ENCODE measurements at regions of chr16 and their contacts with region 1.

Region 1: DNA sequence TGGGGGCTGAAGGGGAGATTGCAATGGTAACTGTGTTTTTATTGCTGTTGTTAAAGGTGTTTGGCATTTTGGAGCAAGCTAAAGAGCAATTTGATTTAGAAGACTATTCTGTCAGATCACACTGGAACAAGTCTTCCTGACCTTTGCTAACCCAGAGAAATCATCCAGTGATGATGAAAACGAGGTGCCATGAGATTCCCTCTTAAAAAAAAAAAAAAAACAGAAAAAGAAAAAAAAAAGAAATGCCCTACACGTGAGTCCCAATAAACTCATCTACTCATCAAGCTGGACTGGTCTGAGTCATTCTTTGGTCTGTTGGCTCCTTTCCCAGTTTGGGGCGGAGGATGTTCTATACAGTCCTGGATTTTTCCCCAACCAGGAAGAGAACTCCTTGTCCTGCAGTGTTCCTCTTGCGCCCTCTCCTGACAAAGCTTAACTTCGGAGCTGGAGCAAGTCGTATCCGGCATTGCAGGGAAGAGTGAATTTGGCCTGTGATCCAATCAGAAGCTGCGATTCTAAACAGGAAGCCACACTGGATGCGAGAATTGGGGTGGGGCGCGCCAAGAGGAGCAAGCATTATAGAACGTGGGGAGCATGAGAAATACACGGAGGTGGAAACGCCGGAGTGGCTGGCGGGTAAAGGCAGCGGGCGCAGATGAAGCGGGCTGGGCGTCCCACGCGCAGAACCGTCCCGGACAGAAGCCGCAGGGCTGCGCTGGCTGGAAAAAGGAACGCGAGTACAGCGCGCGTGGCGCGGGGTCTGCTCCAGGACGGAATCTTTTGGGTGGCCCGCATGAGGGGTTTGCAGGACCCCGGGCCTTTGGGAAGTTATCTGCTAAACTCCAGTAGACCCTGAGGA is 22.4 kb upstream of the CRYM start:
- H3K4me3 ChIP-seq: peak overlapping the region; percentile 76
- H3K27ac ChIP-seq: peak overlapping the region; percentile 37; the same call in 1 of the 2 replicates
- H3K4me1 ChIP-seq: no peaks in the 10 kb centered on the region
- CTCF ChIP-seq: peak; percentile 93

Region 2: DNA sequence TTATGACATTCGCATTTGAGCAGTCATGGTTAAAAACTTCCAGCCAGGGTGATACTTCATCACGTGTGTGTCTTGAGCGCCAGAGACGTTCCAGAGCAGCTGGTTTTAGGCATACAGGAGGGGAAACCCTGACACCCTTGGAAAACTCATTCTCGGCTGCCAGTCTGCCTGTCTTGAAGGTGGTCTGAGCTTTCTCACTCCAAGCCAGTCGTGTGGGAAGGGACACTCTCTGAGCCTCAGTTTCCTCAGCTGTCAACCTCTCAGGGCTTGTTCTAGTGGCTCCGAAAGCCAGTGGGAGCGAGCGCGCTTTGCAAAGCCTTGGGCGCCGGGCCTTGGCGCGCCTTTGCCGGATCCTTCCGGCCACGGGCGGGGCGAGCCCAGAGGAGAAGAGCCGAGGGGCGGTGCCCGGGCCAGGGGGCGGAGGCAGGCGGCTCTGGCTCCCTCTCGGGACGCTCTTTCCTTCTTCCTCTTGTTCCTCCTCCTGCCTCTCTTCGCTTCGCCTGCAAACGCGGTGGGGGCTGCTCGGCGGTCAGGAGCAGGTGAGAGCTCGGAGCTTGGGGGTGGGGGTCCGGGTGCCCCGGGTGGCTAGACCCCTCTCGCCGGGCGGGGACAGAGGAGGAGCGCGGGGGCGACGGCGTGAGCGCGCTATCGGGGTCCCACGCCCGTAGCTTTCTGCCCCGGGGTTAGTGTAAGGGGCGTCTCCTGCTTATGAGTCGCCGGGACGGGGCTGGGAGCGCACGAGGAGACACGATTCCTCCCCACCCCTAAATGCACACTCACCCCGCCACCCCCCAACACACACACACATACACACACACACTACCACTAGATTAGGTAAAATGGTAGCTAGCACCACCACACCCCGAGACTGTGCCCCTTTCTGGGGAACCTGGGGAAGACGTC is 142.1 kb before region 1 on chr16 and contains the start of gene LDAF1:
- CTCF ChIA-PET with region 1: interaction called, 37 read pairs
- POLR2A ChIA-PET with region 1: interaction called, 22 read pairs
- H3K4me3 ChIP-seq: peak within 1 kb of the TSS; percentile 69
- H3K27ac ChIP-seq: no peak within 1 kb of the TSS; the same call in 1 of the 2 replicates
- H3K4me1 ChIP-seq: no peaks in the 10 kb centered on the region
- CTCF ChIP-seq: no peak

Region 3: DNA sequence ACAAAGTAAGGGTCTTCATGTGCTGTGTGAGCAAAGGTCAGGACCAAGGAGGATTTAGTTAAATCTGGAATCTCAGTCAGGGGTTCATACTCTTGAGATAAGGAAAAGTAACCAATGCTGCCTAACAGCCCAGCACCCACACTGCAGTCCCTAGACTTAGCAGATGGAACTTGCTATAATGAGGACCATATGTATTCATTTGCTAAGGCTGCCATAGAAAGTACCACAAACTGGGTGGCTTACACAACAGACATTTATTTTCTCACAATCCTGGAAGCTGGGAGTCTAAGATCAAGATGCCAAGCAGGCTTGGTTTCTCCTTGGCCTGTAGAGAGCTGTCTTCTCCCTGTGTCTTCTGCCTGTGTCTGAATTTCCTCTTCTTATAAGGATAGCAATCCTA is 109.9 kb before region 1 on chr16:
- CTCF ChIA-PET with region 1: interaction called, 44 read pairs
- POLR2A ChIA-PET with region 1: interaction called, 9 read pairs
- H3K4me3 ChIP-seq: no peak overlapping the region
- H3K27ac ChIP-seq: no peak overlapping the region
- H3K4me1 ChIP-seq: no peaks in the 10 kb centered on the region
- CTCF ChIP-seq: no peak

Region 4: DNA sequence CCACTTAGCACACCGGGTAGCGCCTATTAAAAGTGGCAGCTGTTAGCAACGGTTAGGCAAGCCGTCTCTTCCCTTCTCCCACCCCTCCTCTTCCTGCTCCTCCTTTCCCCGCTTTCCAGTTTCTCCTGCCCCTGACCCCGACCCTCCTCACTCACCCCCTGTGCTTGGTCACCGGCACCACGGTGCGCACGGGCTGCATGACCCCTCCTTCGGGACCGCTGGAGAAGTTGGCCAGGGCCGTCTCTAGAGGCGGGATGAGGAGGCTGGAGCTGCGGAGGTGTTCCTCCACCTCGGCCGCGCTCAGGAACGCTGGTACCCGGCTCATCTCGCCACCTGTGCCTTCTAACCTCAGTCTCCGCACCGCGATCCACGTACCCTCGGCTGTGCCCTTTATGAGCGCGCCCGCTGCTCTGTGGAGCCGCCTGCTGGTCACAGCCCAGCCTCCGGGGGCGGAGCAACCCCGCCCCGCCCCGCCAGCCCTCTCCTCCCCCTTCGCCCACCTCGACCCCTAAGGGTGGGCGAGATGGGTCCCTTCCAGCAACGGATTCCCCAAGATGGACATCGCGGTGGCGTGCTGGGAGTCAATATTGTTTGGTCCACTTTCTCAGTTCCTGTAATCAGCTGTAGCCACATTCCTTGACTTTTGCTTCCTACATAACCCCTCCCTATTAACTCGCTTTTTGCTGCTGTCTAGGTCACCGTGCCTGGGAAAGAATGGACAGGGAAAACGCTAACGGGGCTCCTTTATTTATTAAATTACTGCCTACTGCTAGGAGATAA is 22.4 kb before region 1 on chr16 and contains the start of gene CRYM:
- CTCF ChIA-PET with region 1: interaction called, 12 read pairs
- POLR2A ChIA-PET with region 1: no interaction called
- H3K4me3 ChIP-seq: peak within 1 kb of the TSS; percentile 47
- H3K27ac ChIP-seq: no peak within 1 kb of the TSS
- H3K4me1 ChIP-seq: no peaks in the 10 kb centered on the region
- CTCF ChIP-seq: peak; percentile 93

Measured in HEK293 (cell line).